B cell (primary cell): ENCODE measurements at regions of chr15 and their contacts with region 1.

Region 1: DNA sequence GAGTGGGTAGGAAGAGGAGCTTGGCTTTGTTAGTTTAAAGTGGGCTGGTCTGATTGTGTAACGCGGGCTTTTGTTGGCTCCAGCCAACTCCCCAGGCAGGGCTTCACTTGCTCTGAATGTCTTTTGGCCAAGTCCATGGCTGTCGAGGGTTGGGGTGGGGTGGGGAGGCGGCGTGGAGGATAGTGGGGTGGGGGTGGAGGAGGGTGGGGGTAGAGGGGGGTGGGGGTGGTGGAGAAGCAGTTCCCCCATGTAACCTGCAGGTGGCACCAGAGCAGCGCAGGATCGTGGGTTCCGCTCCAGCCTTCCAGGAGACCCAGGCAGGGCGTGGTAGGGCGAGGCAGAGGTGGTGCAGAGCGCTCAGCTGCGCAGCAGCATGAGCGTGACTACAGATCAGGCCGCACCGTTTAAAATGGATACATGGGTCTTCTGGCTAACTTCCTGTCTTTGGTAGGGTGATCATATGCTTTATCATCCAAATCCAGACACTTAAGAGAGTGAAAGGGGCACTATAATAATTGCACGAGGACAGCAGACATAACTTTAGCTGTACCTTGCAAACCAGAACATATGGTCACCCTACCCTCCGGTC is 28.3 kb downstream of the GOLGA6A start:
- DNase-seq: peak; percentile 75
- ATAC-seq: peak; percentile 98
- H3K4me3 ChIP-seq: no peak overlapping the region
- H3K4me3 Mint-ChIP-seq: peak overlapping the region; percentile 59
- H3K27ac ChIP-seq: no peak overlapping the region
- H3K27ac Mint-ChIP-seq: no peak overlapping the region
- H3K4me1 ChIP-seq: peaks cover 6 to 7% of the 10 kb centered on the region in 2 donors
- H3K4me1 Mint-ChIP-seq: peaks cover 9% of the 10 kb centered on the region
- H3K27me3 ChIP-seq: no peaks in the 10 kb centered on the region
- H3K27me3 Mint-ChIP-seq: no peaks in the 10 kb centered on the region
- CTCF ChIP-seq: peak; percentile 37

Region 2: DNA sequence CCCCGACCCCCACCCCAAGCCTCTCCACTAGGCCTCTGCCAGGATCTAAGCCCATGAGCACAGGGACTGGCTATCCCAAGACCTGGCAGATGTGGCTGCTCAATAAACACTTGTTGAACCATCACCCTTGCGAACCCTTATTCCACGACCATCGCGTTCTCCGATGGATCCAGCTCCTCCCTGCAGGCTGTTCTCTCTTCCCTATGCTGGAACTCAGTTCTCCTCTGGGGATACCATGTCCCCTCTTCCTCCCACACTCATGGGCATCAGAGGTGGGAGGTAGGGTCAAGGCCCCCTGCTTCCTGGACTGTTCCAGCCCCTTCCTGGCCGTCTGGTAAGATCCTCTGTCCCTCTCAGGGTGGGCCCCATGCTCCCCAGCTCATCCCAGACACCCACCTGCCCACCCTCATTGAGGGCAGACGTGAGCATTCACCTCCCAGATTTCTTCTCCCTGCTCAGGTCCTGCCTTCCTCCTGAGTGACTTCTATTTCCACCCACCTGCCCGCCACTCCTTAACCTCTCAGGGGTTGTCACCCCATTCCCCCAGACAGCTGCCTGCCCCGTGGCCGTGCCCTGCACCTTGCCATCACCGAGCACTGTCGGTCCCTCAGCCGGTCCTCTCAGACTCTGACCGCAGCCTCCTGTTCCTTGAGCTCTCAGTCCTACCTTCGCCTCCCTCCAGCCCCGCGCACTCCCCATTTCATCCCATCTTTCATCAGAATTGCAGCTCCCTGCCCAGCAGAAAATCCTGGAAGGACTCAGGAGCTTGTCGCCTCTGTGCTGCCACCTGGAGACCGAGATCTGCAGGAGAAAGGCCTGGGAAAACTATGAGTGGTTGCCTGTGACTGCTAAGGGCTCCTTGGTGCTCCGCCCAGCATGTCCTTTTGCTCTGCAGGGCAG is 17.5 kb before region 1 on chr15:
- CTCF ChIA-PET with region 1: interaction called, 10 read pairs
- POLR2A ChIA-PET with region 1: no interaction called
- intact Hi-C with region 1: no loop called
- DNase-seq: no peak
- ATAC-seq: no peak
- H3K4me3 ChIP-seq: no peak overlapping the region
- H3K4me3 Mint-ChIP-seq: no peak overlapping the region
- H3K27ac ChIP-seq: no peak overlapping the region
- H3K27ac Mint-ChIP-seq: no peak overlapping the region
- H3K4me1 ChIP-seq: no peaks in the 10 kb centered on the region
- H3K4me1 Mint-ChIP-seq: no peaks in the 10 kb centered on the region
- H3K27me3 ChIP-seq: no peaks in the 10 kb centered on the region
- H3K27me3 Mint-ChIP-seq: no peaks in the 10 kb centered on the region
- CTCF ChIP-seq: no peak

Region 3: GRCh38 chr15:74322181-74323076 is 268.4 kb after region 1 on chr15:
- CTCF ChIA-PET with region 1: interaction called, 11 read pairs
- POLR2A ChIA-PET with region 1: no interaction called
- intact Hi-C with region 1: no loop called
- DNase-seq: peak; percentile 68
- ATAC-seq: peak; percentile 73
- H3K4me3 ChIP-seq: no peak overlapping the region
- H3K4me3 Mint-ChIP-seq: no peak overlapping the region
- H3K27ac ChIP-seq: no peak overlapping the region
- H3K27ac Mint-ChIP-seq: no peak overlapping the region
- H3K4me1 ChIP-seq: peaks cover 0 to 19% of the 10 kb centered on the region in 2 donors
- H3K4me1 Mint-ChIP-seq: peaks cover 2% of the 10 kb centered on the region
- H3K27me3 ChIP-seq: peaks cover 0 to 10% (median 0%) of the 10 kb centered on the region in 4 experiments
- H3K27me3 Mint-ChIP-seq: peaks cover 21% of the 10 kb centered on the region
- CTCF ChIP-seq: peak; percentile 73